Activated CD4-positive, alpha-beta T cell treated with anti-CD3 and anti-CD28 coated beads for 36 hours (primary cell): ENCODE measurements at regions of chr3 and their contacts with region 1.

Region 1: DNA sequence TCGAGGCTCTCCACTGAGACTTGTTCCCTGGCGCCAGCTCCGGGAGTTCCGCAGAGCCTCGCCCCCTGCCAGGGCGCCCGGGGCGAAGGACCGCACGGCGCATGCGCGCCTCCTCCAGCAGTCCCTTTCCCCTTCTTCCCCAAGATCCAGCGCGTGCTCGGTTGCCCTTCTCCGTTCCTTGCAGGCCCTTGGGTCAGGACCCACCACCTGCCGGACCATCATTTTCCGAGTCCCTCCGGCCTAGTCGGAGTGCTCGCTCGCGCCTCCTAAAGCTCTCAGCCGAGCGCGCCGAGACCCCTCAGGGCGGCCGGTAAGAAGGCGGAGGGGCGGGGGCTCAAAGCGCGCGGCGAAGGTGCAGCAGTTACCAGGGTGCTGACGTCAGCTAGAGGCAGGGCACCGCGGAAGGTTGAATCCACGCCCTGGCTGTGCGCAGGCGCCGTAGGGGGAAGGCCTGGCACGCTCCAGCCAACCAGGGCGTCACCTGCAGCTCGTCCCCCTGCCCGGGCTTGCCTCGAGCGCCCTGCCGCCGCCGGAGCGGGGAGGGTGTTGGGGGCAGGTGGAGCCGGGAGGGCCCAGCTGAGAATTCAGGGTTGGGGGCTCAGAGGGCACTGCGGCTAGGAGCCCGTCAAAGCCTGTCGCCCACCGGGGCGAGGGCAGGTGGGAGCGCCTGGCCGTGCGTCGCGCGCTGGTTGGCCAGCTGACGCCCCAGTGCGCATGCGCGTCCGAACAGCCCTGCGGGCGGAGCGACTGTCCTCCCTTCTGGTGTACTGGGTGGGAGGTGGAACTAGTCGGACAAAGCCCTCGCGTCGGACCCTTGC is at the start of gene TCAIM:
- DNase-seq: peak; percentile 99
- ATAC-seq: peak; percentile 98
- H3K4me3 Mint-ChIP-seq: peak within 1 kb of the TSS; percentile 90
- H3K27ac Mint-ChIP-seq: peak within 1 kb of the TSS; percentile 98
- H3K4me1 Mint-ChIP-seq: peaks cover 18% of the 10 kb centered on the region
- H3K27me3 Mint-ChIP-seq: peaks cover 3% of the 10 kb centered on the region
- total RNA-seq, gene TCAIM: 14.8 to 17.0 TPM

Region 2: DNA sequence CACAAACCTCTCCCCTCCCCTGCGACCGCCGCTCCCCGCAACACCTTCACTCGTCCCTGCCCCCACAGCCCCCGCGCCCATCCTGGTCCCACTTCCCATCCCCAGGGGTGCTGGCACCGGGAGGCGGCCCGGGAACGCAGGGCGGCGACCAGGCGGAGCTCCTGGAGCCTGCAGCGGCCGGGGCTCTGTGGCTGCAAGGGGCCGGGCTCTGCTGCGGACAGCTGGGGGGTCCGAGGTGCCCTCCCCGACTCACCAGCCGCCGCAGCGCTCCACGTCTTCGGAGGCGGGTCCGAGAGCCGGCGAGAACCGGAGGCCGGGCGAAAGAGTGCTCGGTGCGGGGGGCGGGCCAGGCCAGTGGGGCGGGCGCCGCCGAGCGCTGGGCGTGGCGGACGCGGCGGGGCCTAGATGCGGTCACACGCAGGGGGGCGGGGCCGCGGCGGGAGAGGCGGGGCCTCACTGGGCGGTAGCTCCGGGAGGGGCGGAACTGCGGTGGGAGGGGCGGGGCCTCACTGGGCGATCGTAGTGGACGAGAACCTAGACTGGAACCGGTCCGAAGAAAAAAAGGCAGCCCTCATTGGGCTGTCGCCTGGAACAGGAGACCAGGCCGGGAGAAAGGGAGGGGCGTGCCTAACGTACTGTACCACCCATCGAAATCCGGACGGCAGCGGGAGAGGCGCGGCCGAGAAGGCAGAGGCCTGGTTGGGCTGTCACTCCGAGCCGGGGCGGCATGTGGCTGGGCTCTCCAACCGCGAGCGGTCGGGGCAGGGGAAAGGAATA is 716.4 kb before region 1 on chr3 and contains the start of gene ANO10:
- CTCF ChIA-PET with region 1: no interaction called
- POLR2A ChIA-PET with region 1: no interaction called
- intact Hi-C with region 1: loop called in 1 of 2 experiments (anchors 1 kb)
- DNase-seq: peak; percentile 98
- ATAC-seq: peak; percentile 95
- H3K4me3 Mint-ChIP-seq: peak within 1 kb of the TSS; percentile 83
- H3K27ac Mint-ChIP-seq: peak within 1 kb of the TSS; percentile 87
- H3K4me1 Mint-ChIP-seq: peaks cover 12% of the 10 kb centered on the region
- H3K27me3 Mint-ChIP-seq: no peaks in the 10 kb centered on the region
- total RNA-seq, gene ANO10: 6.9 to 9.4 TPM

Region 3: DNA sequence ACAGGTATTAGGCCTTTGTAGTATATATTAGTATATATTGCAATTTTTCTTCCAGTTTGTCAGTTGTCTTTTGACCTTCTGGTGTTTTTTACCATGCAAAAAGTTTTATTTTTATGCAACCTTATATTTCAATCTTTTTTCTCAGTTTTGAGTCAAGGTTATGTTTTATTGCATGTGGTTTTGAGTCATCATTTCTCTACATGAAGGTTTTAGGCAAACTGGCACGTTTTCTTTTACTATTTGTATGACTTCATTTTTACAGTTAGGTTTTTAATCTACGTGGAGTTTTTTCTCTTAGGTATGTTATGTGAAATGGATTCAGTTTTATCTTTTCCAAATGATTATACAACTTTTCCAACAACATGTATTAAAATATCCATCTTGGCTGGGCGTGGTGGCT is 36.5 kb before region 1 on chr3:
- CTCF ChIA-PET with region 1: no interaction called
- POLR2A ChIA-PET with region 1: no interaction called
- intact Hi-C with region 1: no loop called
- DNase-seq: no peak
- ATAC-seq: no peak
- H3K4me3 Mint-ChIP-seq: no peak overlapping the region
- H3K27ac Mint-ChIP-seq: no peak overlapping the region
- H3K4me1 Mint-ChIP-seq: peaks cover 6% of the 10 kb centered on the region
- H3K27me3 Mint-ChIP-seq: peaks cover 6% of the 10 kb centered on the region

Region 4: DNA sequence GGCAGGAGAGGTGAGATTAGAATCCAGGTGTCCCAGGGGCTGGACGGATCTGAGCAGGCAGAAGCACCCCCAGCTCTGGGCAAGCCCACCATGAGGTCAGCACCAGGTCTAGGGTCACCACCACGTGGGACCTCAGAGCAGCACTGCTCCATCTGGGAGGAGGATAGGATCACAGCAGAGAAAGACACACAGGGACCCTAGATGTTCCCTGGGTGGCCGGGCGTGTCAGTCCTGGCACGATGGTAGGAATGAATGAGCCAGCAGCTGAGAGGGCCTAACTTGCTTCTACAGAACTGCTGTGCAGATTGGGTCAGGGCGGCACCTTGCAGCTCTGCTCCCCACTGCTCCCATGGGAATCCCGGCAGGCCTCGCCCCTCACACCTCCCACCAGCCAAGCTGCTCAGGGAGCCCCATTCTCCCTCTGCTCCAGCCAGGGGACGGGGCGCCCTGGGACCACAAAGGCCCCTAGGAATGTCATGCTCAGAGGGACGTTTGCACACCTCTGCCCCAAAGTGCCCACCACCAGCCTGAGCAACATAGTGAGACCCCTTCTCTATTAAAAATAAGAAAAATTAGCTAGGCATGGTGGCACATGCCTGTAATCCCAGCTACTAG is 72.9 kb after region 1 on chr3:
- CTCF ChIA-PET with region 1: no interaction called
- POLR2A ChIA-PET with region 1: no interaction called
- intact Hi-C with region 1: no loop called
- DNase-seq: no peak
- ATAC-seq: no peak
- H3K4me3 Mint-ChIP-seq: no peak overlapping the region
- H3K27ac Mint-ChIP-seq: no peak overlapping the region
- H3K4me1 Mint-ChIP-seq: no peaks in the 10 kb centered on the region
- H3K27me3 Mint-ChIP-seq: no peaks in the 10 kb centered on the region

Region 5: DNA sequence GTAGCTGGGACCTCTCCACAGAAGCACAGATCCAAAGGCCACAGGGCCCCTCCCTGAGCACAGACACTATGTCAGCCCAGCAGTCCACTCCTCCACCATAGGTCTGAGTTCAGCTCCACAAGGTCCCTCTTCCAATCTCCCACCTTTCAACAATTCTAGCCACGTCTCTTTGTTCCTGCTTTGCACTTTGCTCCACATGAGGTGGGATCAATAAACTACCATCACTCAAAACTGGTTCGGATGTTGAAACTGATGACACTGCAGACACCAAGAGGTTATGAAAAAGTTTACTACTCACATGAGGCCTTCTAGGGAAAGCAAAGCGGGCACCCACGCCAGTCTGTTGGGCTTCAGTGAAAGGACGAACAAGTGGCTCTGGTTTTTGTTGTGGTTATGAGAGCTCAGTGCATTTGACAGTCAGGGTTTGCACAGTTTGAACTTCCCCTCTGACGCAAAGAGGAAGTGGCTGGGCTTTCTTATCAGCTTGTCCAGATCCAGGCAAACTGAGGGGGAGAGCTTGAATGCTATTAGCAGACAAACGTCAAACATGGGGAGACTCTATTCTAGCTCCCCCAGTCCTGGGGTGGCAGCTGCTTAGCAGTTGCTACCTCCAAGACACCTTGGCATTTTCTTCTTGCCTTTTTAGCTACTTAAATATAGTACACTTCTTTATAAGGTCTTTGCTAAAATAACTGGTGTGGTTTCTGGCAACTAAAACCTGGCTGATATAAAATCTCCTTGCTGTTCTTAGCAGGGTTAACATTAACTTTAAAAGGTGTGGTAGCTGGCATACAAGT is 101.5 kb after region 1 on chr3:
- CTCF ChIA-PET with region 1: no interaction called
- POLR2A ChIA-PET with region 1: interaction called, 6 read pairs
- intact Hi-C with region 1: loop called in 1 of 2 experiments (anchors 1 kb)
- DNase-seq: peak; percentile 86
- ATAC-seq: peak; percentile 88
- H3K4me3 Mint-ChIP-seq: peak overlapping the region; percentile 58
- H3K27ac Mint-ChIP-seq: peak overlapping the region; percentile 97
- H3K4me1 Mint-ChIP-seq: peaks cover 43% of the 10 kb centered on the region
- H3K27me3 Mint-ChIP-seq: no peaks in the 10 kb centered on the region

Region 6: DNA sequence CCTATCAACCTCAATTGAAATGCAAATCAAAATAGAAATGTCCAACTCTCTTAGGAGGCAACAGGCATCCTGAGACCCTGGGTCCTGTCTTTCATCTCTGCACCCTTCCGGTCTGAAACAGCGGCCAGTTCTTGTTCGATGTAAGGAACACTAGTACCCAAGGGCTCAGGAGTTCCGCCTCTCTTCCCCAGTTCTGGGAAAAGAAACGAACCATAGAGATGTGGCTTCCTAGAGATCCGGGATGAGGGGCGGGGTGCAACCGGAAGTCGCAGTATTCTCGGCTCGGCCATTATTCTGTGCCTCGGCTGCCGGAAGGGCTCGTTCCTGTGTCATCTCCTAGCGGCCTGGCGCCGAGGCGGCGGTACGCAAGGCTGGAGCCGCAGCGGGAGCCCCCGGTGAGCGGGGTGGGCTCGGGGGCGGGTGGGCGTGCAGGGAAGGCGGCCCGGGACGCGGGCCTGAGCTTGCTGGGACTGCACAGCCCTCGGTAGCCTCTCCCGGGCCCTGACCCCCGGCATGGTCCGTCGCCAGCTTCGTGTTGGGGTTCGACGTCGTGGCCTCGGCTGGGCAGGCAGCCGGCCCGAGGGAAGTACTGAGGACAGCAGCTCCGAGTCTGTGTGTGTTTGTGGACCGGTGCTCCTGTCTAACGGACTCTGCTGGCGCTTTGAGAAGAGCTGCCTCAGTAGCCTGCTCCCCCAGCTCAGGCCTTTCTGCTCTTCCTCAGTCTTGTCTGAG is 286.7 kb after region 1 on chr3 and contains the start of gene ZNF197:
- CTCF ChIA-PET with region 1: no interaction called
- POLR2A ChIA-PET with region 1: no interaction called
- intact Hi-C with region 1: loop called in 1 of 2 experiments (anchors 5 kb)
- DNase-seq: peak; percentile 81
- ATAC-seq: peak; percentile 93
- H3K4me3 Mint-ChIP-seq: peak within 1 kb of the TSS; percentile 87
- H3K27ac Mint-ChIP-seq: peak within 1 kb of the TSS; percentile 76
- H3K4me1 Mint-ChIP-seq: peaks cover 24% of the 10 kb centered on the region
- H3K27me3 Mint-ChIP-seq: no peaks in the 10 kb centered on the region
- total RNA-seq, gene ZNF197: 10.9 to 11.6 TPM

Region 7: GRCh38 chr3:44976002-44976815 is 638.0 kb after region 1 on chr3 and contains the starts of genes EXOSC7 and ZDHHC3:
- CTCF ChIA-PET with region 1: no interaction called
- POLR2A ChIA-PET with region 1: no interaction called
- intact Hi-C with region 1: loop called (anchors 1 kb)
- DNase-seq: peak; percentile 92
- ATAC-seq: peak; percentile 89
- H3K4me3 Mint-ChIP-seq: peak within 1 kb of the TSS; percentile 92
- H3K27ac Mint-ChIP-seq: peak within 1 kb of the TSS; percentile 96
- H3K4me1 Mint-ChIP-seq: peaks cover 54% of the 10 kb centered on the region
- H3K27me3 Mint-ChIP-seq: no peaks in the 10 kb centered on the region
- total RNA-seq, gene EXOSC7: 42.7 to 70.7 TPM
- total RNA-seq, gene ZDHHC3: 31.9 to 32.9 TPM